GM23248 (cell line): ENCODE measurements at regions of chr3 and their contacts with region 1.

Region 1: DNA sequence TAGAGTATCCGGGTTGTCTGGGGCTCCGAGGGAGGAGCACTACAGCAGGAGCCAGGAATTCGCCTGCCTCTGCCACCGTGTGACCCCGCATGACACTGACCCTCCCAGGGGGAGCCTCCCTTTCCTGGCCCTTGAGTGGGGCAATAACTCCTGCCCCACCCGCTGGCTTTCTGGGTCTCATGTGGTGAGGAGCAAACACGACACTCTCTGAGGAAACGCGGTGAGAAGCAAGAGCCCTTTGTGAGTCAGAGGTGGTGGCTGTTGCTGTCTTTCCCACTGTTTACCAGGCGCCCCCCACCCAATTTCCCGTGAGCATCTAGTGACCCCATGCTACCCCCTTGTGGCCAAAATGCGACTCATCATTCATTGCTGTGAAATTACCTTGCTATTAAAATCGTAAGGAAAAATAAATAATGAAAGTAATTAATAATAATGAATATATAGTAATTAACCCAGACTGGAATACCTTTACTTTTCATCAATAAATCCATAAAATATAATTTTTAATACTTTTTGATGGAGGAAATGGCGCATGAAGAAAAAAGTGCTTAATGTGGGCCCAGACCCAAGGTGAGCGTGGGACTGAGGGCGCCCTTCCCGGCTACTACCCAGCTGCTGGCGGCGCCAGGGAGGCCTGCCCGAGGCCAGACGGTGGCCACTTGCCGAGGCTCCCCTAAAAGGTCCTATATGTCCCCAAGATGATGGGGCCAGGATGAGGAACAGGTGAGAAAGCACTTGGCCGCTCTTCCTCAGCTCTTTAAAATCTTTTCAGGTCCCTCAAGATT is 29.3 kb downstream of the CCNL1 start:
- DNase-seq: peak; percentile 75
- H3K4me3 ChIP-seq: no peak overlapping the region
- H3K27ac ChIP-seq: peak overlapping the region; percentile 85
- H3K4me1 ChIP-seq: peaks cover 74% of the 10 kb centered on the region
- H3K27me3 ChIP-seq: no peaks in the 10 kb centered on the region

Region 2: DNA sequence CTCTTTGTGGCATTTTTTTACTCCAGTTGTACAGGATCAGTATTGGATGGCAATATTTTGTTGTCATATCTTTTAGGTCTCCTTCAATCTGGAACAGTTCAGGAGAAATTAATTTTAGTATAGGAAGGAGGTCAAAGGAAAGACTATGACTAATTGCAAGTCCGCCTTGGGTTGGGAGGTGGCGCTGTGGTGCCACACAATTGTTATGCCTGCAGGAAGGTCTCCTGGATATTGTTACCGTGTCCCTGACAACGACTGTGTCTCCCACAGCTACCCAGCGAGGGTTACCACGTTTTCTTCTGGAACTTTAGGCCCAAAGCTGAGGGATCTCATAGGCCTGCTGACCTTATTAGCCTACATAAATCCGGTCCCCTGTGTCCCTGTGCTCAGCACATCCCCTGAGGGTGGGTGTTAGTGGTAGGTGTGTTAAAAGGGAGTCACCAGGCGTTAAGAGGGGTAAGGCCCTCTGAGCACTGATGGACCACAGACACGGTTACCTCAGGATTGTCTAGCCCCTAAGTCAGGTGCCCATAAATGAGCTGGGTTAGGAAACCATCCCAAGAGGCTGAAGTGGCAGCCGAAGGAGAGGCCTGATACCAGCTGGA is 978.7 kb before region 1 on chr3:
- in situ Hi-C with region 1: loop called (anchors 25 kb)
- DNase-seq: peak; percentile 83
- H3K4me3 ChIP-seq: no peak overlapping the region
- H3K27ac ChIP-seq: 0 out of 2 replicates have a peak overlapping the region, but pooled peaks have one; percentile 16
- H3K4me1 ChIP-seq: peaks cover 6% of the 10 kb centered on the region; the same call in 1 of the 2 replicates
- H3K27me3 ChIP-seq: no peaks in the 10 kb centered on the region

Region 3: DNA sequence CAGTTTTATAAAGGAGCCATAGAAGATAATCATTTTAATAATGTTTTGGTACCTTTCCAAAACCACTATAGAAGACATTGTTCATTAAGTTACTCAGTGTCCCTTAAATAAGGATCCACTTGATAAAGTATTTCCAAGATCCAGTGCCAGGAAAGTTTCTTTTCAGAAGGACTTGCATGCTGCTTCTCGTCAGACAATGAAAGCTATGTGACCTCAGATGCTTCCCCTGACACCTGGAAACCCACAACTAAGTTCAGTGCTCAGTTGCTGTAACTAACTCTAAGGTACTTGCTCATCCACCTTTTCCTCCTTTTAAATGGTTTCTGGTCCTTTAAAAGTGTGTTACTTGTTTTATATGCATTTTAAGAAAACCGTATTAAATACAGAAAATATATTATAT is 583.0 kb before region 1 on chr3:
- in situ Hi-C with region 1: loop called (anchors 10 kb)
- DNase-seq: no peak
- H3K4me3 ChIP-seq: no peak overlapping the region
- H3K27ac ChIP-seq: peak overlapping the region; percentile 98
- H3K4me1 ChIP-seq: peaks cover 79% of the 10 kb centered on the region
- H3K27me3 ChIP-seq: no peaks in the 10 kb centered on the region

Region 4: DNA sequence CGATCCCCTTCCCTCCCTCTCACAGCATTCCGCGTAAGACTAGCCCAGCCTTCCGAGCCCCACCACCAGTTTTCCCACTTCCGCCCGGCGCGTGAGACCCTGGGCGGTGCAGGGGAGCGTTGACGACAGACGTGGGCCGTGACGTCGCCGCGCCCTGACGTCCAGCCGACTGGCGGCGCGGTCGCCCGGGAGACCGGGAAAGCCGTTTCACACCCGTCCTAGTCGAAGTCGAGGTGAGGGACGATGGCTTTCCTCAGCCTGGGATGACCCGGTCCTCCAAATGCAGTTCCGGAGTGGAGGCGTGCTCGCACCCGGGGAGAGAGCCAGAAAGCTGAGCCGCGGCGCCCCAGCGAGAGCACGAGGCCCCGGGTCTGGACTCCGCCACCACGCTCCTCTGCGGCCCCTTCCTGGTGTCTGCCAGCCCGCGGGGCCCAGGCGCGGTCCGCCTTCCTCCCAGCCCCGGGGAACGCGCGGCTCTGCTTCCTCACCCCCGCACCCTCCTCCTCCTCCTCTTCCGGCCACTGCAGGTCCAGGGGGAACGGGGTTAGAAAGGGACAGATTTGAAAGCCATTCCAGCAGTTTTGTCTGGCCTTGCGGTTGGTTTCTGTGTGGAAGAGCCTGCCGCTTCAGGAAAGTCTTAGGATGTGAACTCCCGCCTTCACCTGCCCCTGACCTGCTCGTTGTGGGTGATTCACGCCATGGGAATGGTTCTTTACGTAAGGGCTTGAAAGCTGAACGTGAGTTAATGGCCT is 304.3 kb before region 1 on chr3 and contains the start of gene LEKR1:
- in situ Hi-C with region 1: loop called (anchors 10 kb)
- DNase-seq: peak; percentile 92
- H3K4me3 ChIP-seq: peak within 1 kb of the TSS; percentile 78
- H3K27ac ChIP-seq: peak within 1 kb of the TSS; percentile 98
- H3K4me1 ChIP-seq: peaks cover 6% of the 10 kb centered on the region; the same call in 1 of the 2 replicates
- H3K27me3 ChIP-seq: no peaks in the 10 kb centered on the region
- total RNA-seq, gene LEKR1: 0.32 TPM in 1 of 2 replicates, not detected in the other